PC-9 (cell line): ENCODE measurements at regions of chr16 and their contacts with region 1.

Region 1: GRCh38 chr16:13919683-13920509 is at the start of gene ERCC4:
- DNase-seq: peak; percentile 97 to 100
- H3K4me3 ChIP-seq: peak within 1 kb of the TSS; percentile 83
- H3K27ac ChIP-seq: peak within 1 kb of the TSS; percentile 49
- H3K4me1 ChIP-seq: peaks cover 9% of the 10 kb centered on the region
- H3K27me3 ChIP-seq: no peaks in the 10 kb centered on the region
- CTCF ChIP-seq: peak; percentile 95
- total RNA-seq, gene ERCC4: 13.5 and 17.4 TPM in 2 replicates

Region 2: GRCh38 chr16:12089492-12090150 is 1830.3 kb before region 1 on chr16:
- CTCF ChIA-PET with region 1: no interaction called
- POLR2A ChIA-PET with region 1: no interaction called
- intact Hi-C with region 1: loop called (anchors 5 kb)
- DNase-seq: no peak
- H3K4me3 ChIP-seq: no peak overlapping the region
- H3K27ac ChIP-seq: no peak overlapping the region
- H3K4me1 ChIP-seq: peaks cover 13% of the 10 kb centered on the region; the same call in 1 of the 2 replicates
- H3K27me3 ChIP-seq: no peaks in the 10 kb centered on the region
- CTCF ChIP-seq: no peak

Region 3: DNA sequence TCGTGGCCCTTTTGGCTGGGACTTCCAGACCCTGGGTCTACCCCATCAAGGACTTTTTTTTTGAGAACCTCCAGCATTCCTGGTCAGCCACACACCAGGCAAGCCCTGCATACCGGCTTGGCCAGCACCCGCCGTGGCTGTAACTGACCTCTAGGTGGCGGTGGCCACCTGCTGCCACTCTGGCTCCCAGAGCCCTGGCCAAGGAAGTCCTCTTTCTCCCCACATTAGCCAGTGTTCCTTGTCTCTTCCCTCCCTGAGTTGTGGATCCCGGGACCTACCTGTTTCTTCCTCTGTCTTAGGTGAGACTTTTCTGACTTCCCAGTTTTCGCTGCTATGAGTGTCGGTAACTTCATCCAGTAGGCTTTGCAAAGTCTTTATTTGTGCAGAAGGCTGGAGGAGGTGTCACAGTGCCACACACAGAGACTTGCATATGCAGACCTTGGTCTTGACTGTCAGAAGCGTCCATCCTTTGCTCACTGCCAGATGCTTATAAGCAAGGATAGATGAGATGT is 1464.6 kb before region 1 on chr16:
- CTCF ChIA-PET with region 1: no interaction called
- POLR2A ChIA-PET with region 1: no interaction called
- intact Hi-C with region 1: loop called (anchors 5 kb)
- DNase-seq: peak; percentile 38 to 80
- H3K4me3 ChIP-seq: no peak overlapping the region
- H3K27ac ChIP-seq: no peak overlapping the region
- H3K4me1 ChIP-seq: no peaks in the 10 kb centered on the region
- H3K27me3 ChIP-seq: no peaks in the 10 kb centered on the region
- CTCF ChIP-seq: peak; percentile 95

Region 4: DNA sequence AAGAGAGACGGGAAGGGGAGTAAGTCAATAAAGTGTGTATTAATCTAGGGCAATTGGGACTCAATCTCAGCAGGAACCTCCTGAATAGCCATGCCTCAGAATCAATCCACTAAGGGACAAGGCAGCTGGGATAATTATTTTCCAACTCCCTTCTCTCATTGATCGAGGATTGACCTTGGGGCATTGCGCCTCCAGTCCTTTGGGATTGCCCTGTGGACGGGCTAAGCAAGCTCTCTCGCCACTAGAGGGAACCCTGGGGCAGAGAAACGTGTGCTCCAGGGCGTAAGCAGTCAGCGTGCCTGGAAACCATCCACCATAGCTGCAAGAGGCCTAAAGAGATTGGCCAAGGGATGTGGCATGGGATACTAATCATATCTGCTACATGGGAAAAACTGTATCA is 53.8 kb before region 1 on chr16:
- CTCF ChIA-PET with region 1: interaction called, 3 read pairs
- POLR2A ChIA-PET with region 1: no interaction called
- intact Hi-C with region 1: loop called (anchors 1 kb)
- DNase-seq: peak; percentile 55 to 66
- H3K4me3 ChIP-seq: no peak overlapping the region
- H3K27ac ChIP-seq: no peak overlapping the region
- H3K4me1 ChIP-seq: no peaks in the 10 kb centered on the region
- H3K27me3 ChIP-seq: peaks cover 45% of the 10 kb centered on the region
- CTCF ChIP-seq: peak; percentile 68

Region 5: DNA sequence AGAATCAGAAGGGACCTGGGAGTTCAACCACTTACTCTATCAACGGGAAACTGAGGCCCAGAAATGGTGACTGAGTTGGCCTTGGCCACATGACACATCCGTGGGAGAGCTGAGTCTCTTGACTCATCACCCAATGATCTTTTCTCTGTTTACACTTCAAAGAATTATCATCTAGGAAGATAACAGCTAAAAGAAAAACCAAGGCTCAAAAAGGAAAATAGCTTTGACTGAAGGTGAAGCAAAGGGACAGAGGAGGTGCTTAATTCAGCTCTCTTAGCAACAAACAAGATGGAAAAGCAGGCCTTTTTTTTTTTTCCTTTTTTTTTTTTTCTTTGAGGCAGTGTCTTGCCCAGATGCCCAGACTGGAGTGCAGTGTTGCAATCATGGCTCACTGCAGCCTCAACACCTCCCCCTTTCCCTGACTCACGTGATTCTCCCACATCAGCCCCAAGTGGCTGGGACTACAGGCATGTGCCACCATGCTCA is 16.7 kb after region 1 on chr16:
- CTCF ChIA-PET with region 1: no interaction called
- POLR2A ChIA-PET with region 1: no interaction called
- intact Hi-C with region 1: no loop called
- DNase-seq: peak in 1 of 2 experiments; percentile 48
- H3K4me3 ChIP-seq: no peak overlapping the region
- H3K27ac ChIP-seq: no peak overlapping the region; the same call in 1 of the 2 replicates
- H3K4me1 ChIP-seq: peaks cover 10% of the 10 kb centered on the region
- H3K27me3 ChIP-seq: no peaks in the 10 kb centered on the region
- CTCF ChIP-seq: no peak

Region 6: DNA sequence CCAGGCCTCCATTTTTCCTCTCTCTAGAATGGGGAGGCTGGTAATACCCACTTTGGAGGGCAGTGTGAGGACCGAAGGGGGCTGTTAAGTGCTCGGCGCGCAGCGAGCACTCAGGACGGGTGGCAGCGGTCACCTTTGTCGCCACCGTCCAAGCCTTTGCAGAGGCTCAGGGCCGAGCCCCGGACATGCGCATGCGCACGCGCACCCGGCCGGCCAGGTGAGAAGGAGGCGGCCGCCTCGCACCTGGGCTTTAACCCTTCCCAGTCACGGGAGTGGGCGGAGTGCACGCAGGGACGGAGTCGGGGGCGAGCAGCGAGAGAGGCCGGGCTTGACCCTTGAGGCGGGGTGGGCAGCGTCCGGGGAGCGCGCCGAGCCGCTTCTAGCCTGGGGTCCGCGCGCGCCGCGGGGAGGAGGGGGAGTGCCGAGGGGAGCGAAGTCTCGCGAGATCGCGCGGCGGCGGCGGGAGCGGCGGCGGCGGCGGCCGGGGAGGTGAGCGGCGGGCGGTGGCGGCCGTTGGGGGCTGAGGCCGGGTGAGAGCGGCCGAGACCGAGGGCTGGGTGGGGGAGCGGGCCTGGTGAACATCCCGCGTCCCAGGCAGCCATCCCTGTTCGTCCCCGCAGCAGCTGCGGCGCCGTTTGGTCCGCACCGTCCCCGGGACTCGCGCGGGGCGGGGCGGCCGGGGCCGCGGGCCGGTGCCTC is 151.1 kb after region 1 on chr16 and contains the start of gene MRTFB:
- CTCF ChIA-PET with region 1: no interaction called
- POLR2A ChIA-PET with region 1: interaction called, 4 read pairs
- intact Hi-C with region 1: loop called (anchors 5 kb)
- DNase-seq: peak; percentile 73 to 95
- H3K4me3 ChIP-seq: peak within 1 kb of the TSS; percentile 95
- H3K27ac ChIP-seq: peak within 1 kb of the TSS; percentile 35
- H3K4me1 ChIP-seq: peaks cover 29% of the 10 kb centered on the region
- H3K27me3 ChIP-seq: no peaks in the 10 kb centered on the region
- CTCF ChIP-seq: no peak
- total RNA-seq, gene MRTFB: 47.3 and 71.5 TPM in 2 replicates

Region 7: DNA sequence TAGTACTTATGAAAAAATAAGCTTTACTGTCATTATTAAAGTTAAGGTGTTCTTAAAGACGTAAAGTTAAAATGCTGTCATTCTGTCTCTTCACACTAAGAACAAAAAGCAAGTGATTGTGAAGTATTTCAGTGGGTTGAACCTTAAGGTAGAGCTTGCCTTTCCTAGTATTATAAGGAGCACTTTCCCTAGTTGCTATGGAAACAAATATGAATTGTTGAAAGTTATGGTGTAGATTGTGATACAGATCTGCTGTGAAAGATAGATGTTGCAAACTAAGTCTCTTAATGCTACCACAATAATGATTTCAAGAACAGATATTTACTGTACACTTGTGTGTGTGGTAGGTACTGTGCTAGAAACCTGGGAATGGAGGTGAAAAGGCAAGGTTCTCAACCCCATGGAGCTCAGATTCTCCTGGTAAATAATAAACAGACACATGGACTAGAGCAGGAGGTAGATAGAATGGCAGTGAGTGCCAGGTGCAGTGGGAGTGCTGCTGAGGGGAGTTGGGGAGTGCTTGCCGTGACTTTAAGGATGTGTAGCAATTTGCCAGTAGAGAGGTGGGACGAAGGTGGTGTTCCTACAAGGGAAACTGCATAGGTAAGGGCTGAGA is 186.0 kb after region 1 on chr16:
- CTCF ChIA-PET with region 1: no interaction called
- POLR2A ChIA-PET with region 1: no interaction called
- intact Hi-C with region 1: no loop called
- DNase-seq: no peak
- H3K4me3 ChIP-seq: no peak overlapping the region
- H3K27ac ChIP-seq: no peak overlapping the region
- H3K4me1 ChIP-seq: peaks cover 29% of the 10 kb centered on the region
- H3K27me3 ChIP-seq: no peaks in the 10 kb centered on the region
- CTCF ChIP-seq: no peak

Region 8: GRCh38 chr16:14249291-14250032 is 329.6 kb after region 1 on chr16:
- CTCF ChIA-PET with region 1: interaction called, 3 read pairs
- POLR2A ChIA-PET with region 1: no interaction called
- intact Hi-C with region 1: loop called (anchors 5 kb)
- DNase-seq: peak in 1 of 2 experiments; percentile 55
- H3K4me3 ChIP-seq: no peak overlapping the region
- H3K27ac ChIP-seq: no peak overlapping the region
- H3K4me1 ChIP-seq: no peaks in the 10 kb centered on the region
- H3K27me3 ChIP-seq: no peaks in the 10 kb centered on the region
- CTCF ChIP-seq: peak; percentile 88

Region 9: DNA sequence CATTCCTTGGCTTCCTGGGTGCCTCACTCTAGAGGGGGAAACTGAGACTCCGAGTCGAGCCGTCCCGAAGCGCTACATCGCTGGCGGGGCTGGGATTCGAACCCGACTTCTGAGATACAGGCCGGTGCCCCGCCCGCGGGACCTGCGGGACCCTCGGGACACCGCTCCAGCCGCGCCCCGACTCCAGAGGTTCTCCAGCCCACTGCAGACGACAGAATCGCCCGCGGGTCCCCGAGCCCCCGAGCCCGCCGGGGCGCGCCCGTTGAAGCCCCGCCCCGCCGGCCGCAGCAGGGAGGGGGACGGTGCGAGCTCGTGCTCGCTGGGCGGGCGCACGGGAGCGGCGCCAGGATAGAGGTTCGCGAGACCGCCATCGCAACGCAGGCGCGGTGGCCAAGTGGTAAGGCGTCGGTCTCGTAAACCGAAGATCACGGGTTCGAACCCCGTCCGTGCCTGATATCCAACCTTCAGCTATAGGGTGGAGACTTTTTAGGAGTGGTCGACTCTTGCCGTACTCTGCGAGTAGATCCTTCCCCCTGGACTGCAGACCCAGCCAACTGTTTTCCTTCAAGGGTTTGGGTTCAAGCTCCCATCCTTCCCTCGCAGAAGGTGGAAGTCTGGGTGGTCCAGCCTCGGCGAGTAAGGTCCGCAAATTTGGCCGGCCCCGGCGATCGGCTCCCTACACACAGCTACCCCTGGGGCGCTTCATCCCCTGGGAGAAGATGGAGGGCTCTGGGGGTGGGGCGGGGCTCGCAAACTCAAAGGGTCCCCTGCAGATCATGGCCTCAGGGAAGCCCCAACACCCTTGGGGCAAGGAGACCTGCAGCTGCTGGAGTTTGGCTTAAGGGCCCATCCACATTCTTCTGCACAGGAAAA is 365.9 kb after region 1 on chr16:
- CTCF ChIA-PET with region 1: interaction called, 9 read pairs
- POLR2A ChIA-PET with region 1: interaction called, 5 read pairs
- intact Hi-C with region 1: loop called (anchors 1 kb)
- DNase-seq: peak; percentile 75 to 98
- H3K4me3 ChIP-seq: peak overlapping the region; percentile 75
- H3K27ac ChIP-seq: no peak overlapping the region
- H3K4me1 ChIP-seq: peaks cover 18% of the 10 kb centered on the region
- H3K27me3 ChIP-seq: no peaks in the 10 kb centered on the region
- CTCF ChIP-seq: no peak